A549 (cell line): ENCODE measurements at regions of chr10 and their contacts with region 1.

Region 1: DNA sequence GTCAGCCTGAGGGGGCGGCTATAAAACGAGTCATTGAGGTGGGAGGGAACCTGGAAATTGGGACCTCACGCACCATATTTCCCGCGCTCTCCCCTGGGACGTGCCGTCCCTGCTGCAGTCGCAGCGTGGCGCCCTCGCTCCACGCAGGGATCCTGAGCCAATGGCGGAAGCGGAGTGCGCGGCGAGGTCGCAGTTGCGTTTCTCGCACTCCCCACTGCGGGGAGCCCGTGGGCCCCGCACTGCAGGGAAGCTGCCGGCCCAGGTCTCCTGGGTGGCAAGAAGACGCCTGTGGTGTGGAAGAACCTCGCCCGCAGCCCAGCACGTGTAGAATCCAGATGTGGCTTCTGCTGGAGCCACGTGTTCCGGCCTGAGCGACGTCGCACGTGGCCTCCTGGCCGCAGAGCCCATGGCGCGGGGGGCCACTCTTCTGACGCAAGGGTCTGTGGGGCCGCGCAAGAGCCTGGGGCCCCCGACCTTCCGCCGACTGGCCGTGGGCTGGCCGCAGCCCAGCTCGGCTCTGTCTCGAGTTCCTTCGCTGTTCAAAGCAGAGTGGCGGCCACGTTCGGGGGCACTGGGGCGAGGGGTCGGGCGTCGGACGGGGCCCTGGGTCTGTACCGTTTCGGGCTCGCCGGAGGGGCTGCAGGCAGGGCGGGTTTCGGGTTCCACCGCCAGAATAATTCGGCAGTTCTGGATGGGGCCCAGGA is 26.4 kb downstream of the HIF1AN start:
- DNase-seq: peak; percentile 84 to 86
- ATAC-seq: peak; percentile 78 to 90
- H3K4me3 ChIP-seq: no peak overlapping the region
- H3K27ac ChIP-seq: peak overlapping the region in 1 of 2 experiments; percentile 63; a peak in 3 of 6 replicates
- H3K4me1 ChIP-seq: peaks cover 7% of the 10 kb centered on the region; the same call in 2 of the 3 replicates
- CTCF ChIP-seq: peak; percentile 98
- EP300 ChIP-seq: no peak
- POLR2A ChIP-seq: 0 out of 2 replicates have a peak, but pooled peaks have one; percentile 10
- RAD21 ChIP-seq: peak; percentile 97 to 98

Region 2: DNA sequence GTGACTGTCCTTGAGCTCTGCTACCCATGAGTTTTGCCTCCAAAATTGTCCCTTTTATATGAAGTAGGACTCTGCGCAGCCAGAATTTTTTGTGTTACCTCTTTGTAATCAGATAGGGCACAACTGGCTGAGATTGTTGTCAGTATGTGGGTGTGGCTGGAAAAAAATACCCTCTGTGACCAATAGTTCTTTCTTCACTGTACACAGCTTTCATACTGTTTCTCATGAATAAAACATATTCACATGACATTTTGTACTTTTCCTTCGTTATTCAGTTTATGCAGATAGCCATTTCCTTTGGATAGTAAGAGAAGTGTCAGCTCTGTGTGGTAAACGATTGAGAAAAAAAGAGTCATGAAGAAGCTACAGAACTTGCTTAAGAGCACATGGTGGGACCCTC is 149.0 kb before region 1 on chr10:
- CTCF ChIA-PET with region 1: no interaction called
- POLR2A ChIA-PET with region 1: no interaction called
- DNase-seq: no peak
- ATAC-seq: no peak; a peak in 1 of 6 replicates
- H3K4me3 ChIP-seq: no peak overlapping the region
- H3K27ac ChIP-seq: no peak overlapping the region
- H3K4me1 ChIP-seq: no peaks in the 10 kb centered on the region
- CTCF ChIP-seq: no peak
- EP300 ChIP-seq: no peak
- POLR2A ChIP-seq: no peak
- RAD21 ChIP-seq: no peak

Region 3: GRCh38 chr10:100470367-100470766 is 91.8 kb before region 1 on chr10:
- CTCF ChIA-PET with region 1: no interaction called
- POLR2A ChIA-PET with region 1: no interaction called
- DNase-seq: no peak
- ATAC-seq: no peak
- H3K4me3 ChIP-seq: no peak overlapping the region
- H3K27ac ChIP-seq: no peak overlapping the region
- H3K4me1 ChIP-seq: no peaks in the 10 kb centered on the region
- CTCF ChIP-seq: no peak
- EP300 ChIP-seq: no peak
- POLR2A ChIP-seq: no peak
- RAD21 ChIP-seq: no peak

Region 4: DNA sequence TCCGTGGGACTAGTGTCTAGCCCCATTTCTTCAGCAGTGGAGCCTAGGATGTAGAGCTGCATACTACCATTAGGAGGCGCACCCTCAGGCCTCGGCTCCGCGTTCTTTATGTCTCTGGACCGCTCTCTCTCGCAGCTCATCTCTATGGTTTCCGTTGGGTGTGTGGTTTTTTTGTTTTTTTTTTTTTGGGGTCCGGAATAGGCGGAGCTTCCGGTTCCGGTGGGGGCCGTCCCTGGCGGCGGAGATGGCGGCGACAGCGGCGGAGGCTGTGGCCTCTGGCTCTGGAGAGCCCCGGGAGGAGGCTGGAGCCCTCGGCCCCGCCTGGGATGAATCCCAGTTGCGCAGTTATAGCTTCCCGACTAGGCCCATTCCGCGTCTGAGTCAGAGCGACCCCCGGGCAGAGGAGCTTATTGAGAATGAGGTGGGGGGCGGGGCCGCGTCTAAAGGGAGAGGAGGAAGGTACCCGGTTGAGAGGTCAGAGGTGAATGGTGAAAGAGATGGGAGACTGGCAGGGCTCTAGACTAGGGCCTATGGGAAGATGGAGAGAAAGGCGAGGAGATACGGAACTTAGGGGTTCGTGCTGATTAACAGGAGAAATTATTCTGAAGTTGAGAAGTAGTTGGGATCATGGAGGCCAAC is 26.3 kb before region 1 on chr10 and contains the start of gene HIF1AN:
- CTCF ChIA-PET with region 1: interaction called, 13 read pairs
- POLR2A ChIA-PET with region 1: interaction called, 4 read pairs
- DNase-seq: peak; percentile 97 to 98
- ATAC-seq: peak; percentile 99
- H3K4me3 ChIP-seq: peak within 1 kb of the TSS; percentile 75
- H3K27ac ChIP-seq: peak within 1 kb of the TSS; percentile 84 to 87
- H3K4me1 ChIP-seq: peaks cover 12% of the 10 kb centered on the region; the same call in 2 of the 3 replicates
- CTCF ChIP-seq: peak; percentile 85
- EP300 ChIP-seq: no peak
- POLR2A ChIP-seq: peak; percentile 87
- RAD21 ChIP-seq: no peak
- polyA plus RNA-seq, gene HIF1AN: 21.6 and 26.4 TPM in 2 replicates

Region 5: DNA sequence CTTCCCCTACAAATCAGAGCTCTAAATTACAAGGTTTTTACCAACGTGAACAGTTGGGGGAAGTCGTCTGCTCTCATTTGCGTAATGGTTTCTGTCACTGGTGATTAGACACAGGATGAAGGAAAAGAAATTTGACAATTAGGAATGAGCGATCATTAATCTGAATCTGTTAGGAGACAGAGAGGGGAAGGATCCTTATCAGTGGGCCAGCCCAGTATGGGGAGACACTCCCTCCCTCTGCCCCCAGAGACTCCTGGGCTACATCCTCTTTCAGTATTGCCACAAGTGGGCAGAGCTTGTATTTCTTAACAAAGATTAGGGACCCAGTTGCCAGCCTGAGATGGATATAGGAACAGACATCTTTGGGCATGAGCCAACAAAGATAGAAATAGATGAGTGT is 11.0 kb before region 1 on chr10:
- CTCF ChIA-PET with region 1: interaction called, 82 read pairs
- POLR2A ChIA-PET with region 1: interaction called, 4 read pairs
- DNase-seq: no peak
- ATAC-seq: no peak
- H3K4me3 ChIP-seq: no peak overlapping the region
- H3K27ac ChIP-seq: no peak overlapping the region
- H3K4me1 ChIP-seq: peaks cover 6% of the 10 kb centered on the region; the same call in 1 of the 3 replicates
- CTCF ChIP-seq: no peak
- EP300 ChIP-seq: no peak
- POLR2A ChIP-seq: no peak
- RAD21 ChIP-seq: no peak

Region 6: GRCh38 chr10:100579261-100580090 is 17.3 kb after region 1 on chr10:
- CTCF ChIA-PET with region 1: interaction called, 26 read pairs
- POLR2A ChIA-PET with region 1: no interaction called
- DNase-seq: no peak
- ATAC-seq: no peak
- H3K4me3 ChIP-seq: no peak overlapping the region
- H3K27ac ChIP-seq: no peak overlapping the region
- H3K4me1 ChIP-seq: no peaks in the 10 kb centered on the region
- CTCF ChIP-seq: no peak
- EP300 ChIP-seq: no peak
- POLR2A ChIP-seq: no peak
- RAD21 ChIP-seq: no peak

Region 7: GRCh38 chr10:100670828-100671479 is 108.8 kb after region 1 on chr10:
- CTCF ChIA-PET with region 1: interaction called, 32 read pairs
- POLR2A ChIA-PET with region 1: no interaction called
- DNase-seq: peak; percentile 26 to 47
- ATAC-seq: peak; percentile 85 to 94
- H3K4me3 ChIP-seq: peak overlapping the region; percentile 37
- H3K27ac ChIP-seq: peak overlapping the region in 1 of 2 experiments; percentile 43; a peak in 2 of 6 replicates
- H3K4me1 ChIP-seq: no peaks in the 10 kb centered on the region
- CTCF ChIP-seq: peak; percentile 97
- EP300 ChIP-seq: no peak
- POLR2A ChIP-seq: no peak
- RAD21 ChIP-seq: peak; percentile 41 to 74

Region 8: DNA sequence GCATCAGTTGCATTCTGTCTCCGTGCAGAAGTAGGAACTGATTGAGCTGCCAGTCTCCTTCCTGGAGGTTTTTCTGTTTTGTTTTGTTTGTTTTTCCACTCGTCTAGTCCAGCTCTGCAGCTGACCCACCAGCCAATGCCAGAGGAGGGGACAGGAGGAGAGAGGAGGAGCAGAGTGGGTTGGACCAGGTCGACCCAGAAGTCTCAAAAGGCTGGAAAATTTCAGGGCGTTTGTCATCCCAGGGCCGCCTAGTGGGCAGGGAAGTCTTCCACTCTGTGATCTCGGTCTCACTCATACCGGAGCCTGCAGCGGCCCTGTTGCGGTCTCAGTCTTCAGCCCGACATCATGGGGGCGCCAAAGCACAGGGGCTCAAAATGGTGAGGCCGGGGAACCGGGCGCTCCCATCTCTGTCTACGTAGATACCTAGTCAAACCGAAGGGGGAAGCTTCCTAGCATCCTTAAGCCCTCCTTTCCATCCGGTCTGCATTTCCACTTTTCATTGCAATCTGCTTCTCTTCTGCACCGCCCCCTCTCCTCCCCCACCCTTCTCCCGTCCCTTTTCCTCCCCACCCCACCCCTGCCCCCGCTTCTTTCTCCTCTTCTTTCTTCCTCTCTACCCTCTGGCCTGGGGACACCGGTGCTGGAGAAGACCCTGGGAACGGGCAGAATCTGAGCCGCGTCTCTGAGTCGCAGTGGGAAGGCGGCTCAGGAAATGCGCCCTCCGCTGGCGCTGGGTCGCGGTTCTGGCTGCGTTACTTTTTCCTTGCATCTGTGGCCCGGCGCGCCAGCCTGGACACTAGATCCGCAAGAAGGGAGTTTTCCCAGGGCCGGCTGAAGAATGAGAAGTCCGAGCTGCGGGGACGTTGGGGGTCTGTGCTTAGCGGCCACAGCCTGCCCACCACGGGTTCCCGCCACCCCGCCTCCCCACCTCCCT is 167.0 kb after region 1 on chr10:
- CTCF ChIA-PET with region 1: interaction called, 29 read pairs
- POLR2A ChIA-PET with region 1: no interaction called
- DNase-seq: peak; percentile 90 to 93
- ATAC-seq: peak; percentile 79 to 88
- H3K4me3 ChIP-seq: peak overlapping the region; percentile 46
- H3K27ac ChIP-seq: peak overlapping the region; percentile 80 to 93
- H3K4me1 ChIP-seq: peaks cover 21% of the 10 kb centered on the region
- CTCF ChIP-seq: peak; percentile 85
- EP300 ChIP-seq: no peak
- POLR2A ChIP-seq: peak; percentile 52
- RAD21 ChIP-seq: peak; percentile 62 to 73

Region 9: DNA sequence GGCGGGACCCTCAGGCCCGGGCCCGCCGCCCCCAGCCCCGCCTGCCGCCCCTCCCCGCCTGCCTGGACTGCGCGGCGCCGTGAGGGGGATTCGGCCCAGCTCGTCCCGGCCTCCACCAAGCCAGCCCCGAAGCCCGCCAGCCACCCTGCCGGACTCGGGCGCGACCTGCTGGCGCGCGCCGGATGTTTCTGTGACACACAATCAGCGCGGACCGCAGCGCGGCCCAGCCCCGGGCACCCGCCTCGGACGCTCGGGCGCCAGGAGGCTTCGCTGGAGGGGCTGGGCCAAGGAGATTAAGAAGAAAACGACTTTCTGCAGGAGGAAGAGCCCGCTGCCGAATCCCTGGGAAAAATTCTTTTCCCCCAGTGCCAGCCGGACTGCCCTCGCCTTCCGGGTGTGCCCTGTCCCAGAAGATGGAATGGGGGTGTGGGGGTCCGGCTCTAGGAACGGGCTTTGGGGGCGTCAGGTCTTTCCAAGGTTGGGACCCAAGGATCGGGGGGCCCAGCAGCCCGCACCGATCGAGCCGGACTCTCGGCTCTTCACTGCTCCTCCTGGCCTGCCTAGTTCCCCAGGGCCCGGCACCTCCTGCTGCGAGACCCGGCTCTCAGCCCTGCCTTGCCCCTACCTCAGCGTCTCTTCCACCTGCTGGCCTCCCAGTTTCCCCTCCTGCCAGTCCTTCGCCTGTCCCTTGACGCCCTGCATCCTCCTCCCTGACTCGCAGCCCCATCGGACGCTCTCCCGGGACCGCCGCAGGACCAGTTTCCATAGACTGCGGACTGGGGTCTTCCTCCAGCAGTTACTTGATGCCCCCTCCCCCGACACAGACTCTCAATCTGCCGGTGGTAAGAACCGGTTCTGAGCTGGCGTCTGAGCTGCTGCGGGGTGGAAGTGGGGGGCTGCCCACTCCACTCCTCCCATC is 265.9 kb after region 1 on chr10:
- CTCF ChIA-PET with region 1: interaction called, 10 read pairs
- POLR2A ChIA-PET with region 1: no interaction called
- DNase-seq: peak; percentile 43 to 75
- ATAC-seq: peak; percentile 72 to 78
- H3K4me3 ChIP-seq: peak overlapping the region; percentile 50
- H3K27ac ChIP-seq: peak overlapping the region; percentile 34 to 80; a peak in 5 of 6 replicates
- H3K4me1 ChIP-seq: 0 out of 3 replicates have a peak, but pooled peaks cover 5% of the 10 kb centered on the region
- CTCF ChIP-seq: peak; percentile 30
- EP300 ChIP-seq: no peak
- POLR2A ChIP-seq: no peak
- RAD21 ChIP-seq: peak in 1 of 2 experiments; percentile 32; a peak in 1 of 5 replicates